ENCODE measurements at regions of chr17 and their contacts with region 1.

Region 1: DNA sequence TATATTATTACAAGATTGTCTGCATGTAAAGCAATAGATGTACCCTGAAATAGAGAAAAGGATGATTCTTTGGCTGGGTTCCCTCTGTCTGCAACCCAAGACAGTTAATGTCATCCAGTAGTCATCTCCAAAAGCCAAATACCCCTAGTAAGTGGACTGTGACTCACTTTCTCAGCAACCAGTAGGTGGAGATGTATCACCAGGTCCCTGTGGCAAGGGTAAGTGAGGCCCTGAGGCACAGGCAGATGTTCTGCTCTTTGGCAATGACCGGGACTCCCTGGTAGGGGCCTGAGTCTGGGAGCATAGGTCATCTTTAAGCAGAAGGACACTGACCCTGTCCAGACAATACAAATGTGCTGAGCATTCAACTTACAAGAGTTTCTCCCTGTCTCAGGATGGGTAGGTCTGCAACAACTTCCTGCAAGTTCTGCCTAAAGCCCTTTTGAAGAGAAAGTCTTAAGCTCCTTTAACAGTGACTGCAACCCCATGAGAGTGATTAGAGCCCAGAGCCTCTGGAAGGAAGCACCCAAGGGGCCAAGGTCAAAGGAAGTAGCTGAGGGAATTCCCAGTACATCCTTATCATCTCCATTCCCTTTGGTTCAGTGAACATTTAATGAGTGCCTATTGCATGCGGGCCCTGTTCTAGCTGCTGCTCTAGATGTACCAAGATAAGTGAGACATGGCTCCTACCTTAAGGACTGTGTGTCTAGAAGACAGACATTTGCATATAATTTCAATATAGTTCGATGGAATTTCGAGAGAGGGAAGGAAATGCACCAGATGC is 31.9 kb downstream of the PMP22 start:
- DNase-seq: no peak
- H3K4me3 ChIP-seq: no peak overlapping the region
- H3K27ac ChIP-seq: no peak overlapping the region
- H3K4me1 ChIP-seq: peaks cover 0 to 3% (median 0%) of the 10 kb centered on the region in 4 experiments; a peak in 1 of 7 replicates
- H3K27me3 ChIP-seq: no peaks in the 10 kb centered on the region; a peak in 1 of 7 replicates
- CTCF ChIP-seq: peak; percentile 53 to 66 (median 53)
- EP300 ChIP-seq: no peak
- POLR2A ChIP-seq: no peak
- RAD21 ChIP-seq: peak; percentile 71 to 82

Region 2: DNA sequence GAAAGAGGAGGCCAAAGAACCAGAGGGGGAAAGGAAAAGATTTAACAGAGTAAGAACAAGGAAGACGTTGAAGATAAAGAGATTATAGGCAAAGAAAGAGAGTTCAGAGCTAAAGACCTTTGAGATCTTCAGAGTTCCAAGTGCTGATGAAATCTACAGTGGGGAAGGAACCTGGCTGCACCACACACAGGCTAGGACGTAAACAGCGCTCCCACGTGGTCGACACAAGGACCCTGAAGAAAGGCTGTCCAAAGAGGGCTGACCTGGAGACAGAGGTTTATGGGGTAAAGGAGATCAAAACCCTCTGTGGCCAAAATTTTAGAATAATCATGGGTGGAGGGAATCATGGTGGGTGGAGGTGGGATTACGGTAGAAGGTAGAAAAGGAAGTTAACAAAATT is 89.7 kb before region 1 on chr17:
- CTCF ChIA-PET with region 1: no interaction called
- POLR2A ChIA-PET with region 1: no interaction called
- DNase-seq: no peak
- H3K4me3 ChIP-seq: no peak overlapping the region
- H3K27ac ChIP-seq: no peak overlapping the region
- H3K4me1 ChIP-seq: no peaks in the 10 kb centered on the region
- H3K27me3 ChIP-seq: no peaks in the 10 kb centered on the region
- CTCF ChIP-seq: peak; percentile 35 to 53 (median 41)
- EP300 ChIP-seq: no peak
- POLR2A ChIP-seq: no peak
- RAD21 ChIP-seq: peak; percentile 43 to 65; a peak in 3 of 4 replicates

Region 3: DNA sequence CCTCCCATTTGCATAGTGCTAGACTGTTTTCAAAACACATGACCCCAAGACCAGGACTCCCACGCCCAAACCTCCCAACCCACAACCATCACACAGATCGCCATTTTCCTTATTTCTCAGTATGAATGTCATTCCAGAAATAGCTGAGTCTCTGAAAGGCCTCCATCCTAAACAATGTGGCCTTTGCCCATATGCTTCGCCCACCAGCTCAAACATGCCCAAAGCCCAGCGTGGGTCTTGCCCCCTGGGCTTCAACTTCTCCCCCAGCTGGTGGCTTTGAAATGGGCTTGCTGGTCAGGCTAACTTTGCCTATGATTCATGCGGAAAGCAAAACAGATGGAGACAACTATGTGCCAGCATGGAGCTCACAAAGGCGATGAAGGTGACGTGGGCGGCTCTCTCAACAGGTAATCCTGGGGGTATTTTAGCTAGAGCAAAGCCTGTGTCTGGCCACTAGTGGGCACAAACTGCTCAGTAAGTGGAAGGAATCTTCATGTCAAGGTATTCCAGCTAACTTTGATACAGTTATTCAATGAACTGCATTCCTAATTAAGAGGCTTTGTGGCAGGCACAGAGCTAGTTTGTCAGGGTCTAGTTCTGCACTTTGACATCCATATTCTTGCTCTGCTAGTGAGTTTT is 14.8 kb after region 1 on chr17:
- CTCF ChIA-PET with region 1: interaction called, 30 read pairs
- POLR2A ChIA-PET with region 1: no interaction called
- DNase-seq: no peak
- H3K4me3 ChIP-seq: no peak overlapping the region
- H3K27ac ChIP-seq: no peak overlapping the region
- H3K4me1 ChIP-seq: no peaks in the 10 kb centered on the region
- H3K27me3 ChIP-seq: no peaks in the 10 kb centered on the region; a peak in 1 of 7 replicates
- CTCF ChIP-seq: peak; percentile 33 to 79 (median 56)
- EP300 ChIP-seq: no peak
- POLR2A ChIP-seq: no peak
- RAD21 ChIP-seq: peak; percentile 70 to 80

Region 4: DNA sequence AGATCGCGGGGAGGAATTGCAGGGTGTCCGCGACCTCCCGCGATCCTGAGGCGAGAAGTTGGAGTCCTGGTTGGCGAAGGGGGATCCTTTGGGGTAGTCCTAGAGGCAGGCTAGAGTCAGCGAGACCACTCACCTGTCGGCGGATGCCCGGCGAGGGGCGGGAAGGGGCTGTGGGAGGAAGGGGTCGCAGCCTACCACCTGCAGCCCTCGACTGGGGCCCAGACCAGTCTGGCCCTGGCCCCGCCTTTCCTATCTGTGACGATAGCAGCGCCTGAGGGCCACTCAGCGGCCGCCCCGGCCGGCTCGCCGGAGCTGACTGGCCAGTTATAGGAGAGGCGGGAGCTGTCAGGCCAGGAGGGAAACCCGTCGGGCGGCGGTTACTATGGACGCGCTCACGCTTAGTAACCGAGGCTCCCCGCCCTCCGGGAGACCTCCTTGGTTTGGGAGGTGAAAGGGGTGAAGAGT is 108.2 kb after region 1 on chr17 and contains the start of gene TEKT3:
- CTCF ChIA-PET with region 1: no interaction called
- POLR2A ChIA-PET with region 1: no interaction called
- DNase-seq: peak; percentile 76 to 94
- H3K4me3 ChIP-seq: peak within 1 kb of the TSS; percentile 70 to 87 (median 76)
- H3K27ac ChIP-seq: no peak within 1 kb of the TSS
- H3K4me1 ChIP-seq: peaks cover 0 to 3% (median 1%) of the 10 kb centered on the region in 4 experiments; a peak in 4 of 7 replicates
- H3K27me3 ChIP-seq: peaks cover 0 to 5% (median 2%) of the 10 kb centered on the region in 4 experiments; a peak in 1 of 7 replicates
- CTCF ChIP-seq: no peak
- EP300 ChIP-seq: no peak
- POLR2A ChIP-seq: no peak
- RAD21 ChIP-seq: no peak
- total RNA-seq, gene TEKT3: 1.6 and 2.2 TPM in 2 replicates

Measured in H1 (cell line).